ENCODE measurements at regions of chr14 and their contacts with region 1.

Region 1: GRCh38 chr14:23006544-23007419 is 3.2 kb downstream of the C14orf93 start:
- DNase-seq: peak; percentile 100
- ATAC-seq: peak; percentile 97
- H3K4me3 ChIP-seq: peak overlapping the region; percentile 68 to 82 (median 80)
- H3K27ac ChIP-seq: peak overlapping the region; percentile 86
- H3K4me1 ChIP-seq: peaks cover 52% of the 10 kb centered on the region
- H3K27me3 ChIP-seq: no peaks in the 10 kb centered on the region; a peak in 1 of 5 replicates
- CTCF ChIP-seq: peak; percentile 76
- EP300 ChIP-seq: peak in 1 of 2 experiments; percentile 9; a peak in 3 of 4 replicates
- POLR2A ChIP-seq: peak; percentile 96 to 98
- RAD21 ChIP-seq: peak; percentile 91

Region 2: GRCh38 chr14:22929104-22929847 is 77.5 kb before region 1 on chr14 and contains the start of gene PRMT5:
- CTCF ChIA-PET with region 1: no interaction called
- POLR2A ChIA-PET with region 1: interaction called, 54 read pairs
- in situ Hi-C with region 1: no loop called
- intact Hi-C with region 1: loop called (anchors 1 kb)
- DNase-seq: peak; percentile 100
- ATAC-seq: peak; percentile 98
- H3K4me3 ChIP-seq: peak within 1 kb of the TSS; percentile 77 to 98 (median 92)
- H3K27ac ChIP-seq: peak within 1 kb of the TSS; percentile 78
- H3K4me1 ChIP-seq: peaks cover 27% of the 10 kb centered on the region
- H3K27me3 ChIP-seq: no peaks in the 10 kb centered on the region; a peak in 1 of 5 replicates
- CTCF ChIP-seq: peak; percentile 60
- EP300 ChIP-seq: peak; percentile 56 to 82; a peak in 3 of 4 replicates
- POLR2A ChIP-seq: peak; percentile 96 to 98
- RAD21 ChIP-seq: peak; percentile 74
- total RNA-seq, gene PRMT5: 210 and 289 TPM in 2 replicates

Region 3: DNA sequence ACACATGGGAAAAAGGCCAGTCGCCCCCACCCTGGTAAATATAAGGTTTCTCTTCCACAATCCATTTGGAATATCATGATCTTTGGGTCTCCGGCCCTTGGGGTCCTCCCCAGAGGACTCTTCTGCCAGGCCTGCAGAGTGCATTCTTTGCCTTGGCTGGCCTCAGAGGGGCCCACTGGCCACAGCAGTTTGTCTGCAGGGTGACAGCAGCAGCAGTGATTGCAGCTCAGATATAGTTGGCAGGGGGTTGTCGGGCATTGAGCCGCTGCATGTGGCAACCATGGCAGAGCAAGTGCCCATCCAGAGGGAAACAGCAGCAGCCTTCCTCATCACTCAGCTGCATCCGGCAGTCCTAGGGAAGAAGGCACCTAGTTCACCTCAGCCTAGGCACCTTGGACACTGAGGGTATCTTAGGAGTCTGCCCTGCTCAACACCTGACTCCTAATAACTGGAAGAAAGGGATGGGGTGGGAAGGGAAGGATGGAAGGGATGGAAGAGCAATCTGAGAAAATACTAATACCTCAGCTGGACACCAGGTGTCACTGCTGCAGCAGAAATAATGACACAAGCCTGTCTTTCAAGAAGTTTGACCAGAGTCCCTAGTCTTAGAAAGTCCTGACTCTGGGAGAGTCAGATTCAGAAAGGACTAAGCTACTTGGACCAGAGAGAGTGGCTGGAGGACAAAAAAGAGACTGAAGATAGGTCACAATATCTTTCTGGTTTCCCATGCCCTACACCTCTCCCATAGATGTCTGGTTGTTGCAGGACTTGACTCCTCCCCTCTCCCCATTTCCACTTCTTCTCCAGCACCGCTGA is 33.4 kb before region 1 on chr14:
- CTCF ChIA-PET with region 1: no interaction called
- POLR2A ChIA-PET with region 1: interaction called, 561 read pairs
- in situ Hi-C with region 1: no loop called
- intact Hi-C with region 1: no loop called
- DNase-seq: peak; percentile 82
- ATAC-seq: no peak
- H3K4me3 ChIP-seq: no peak overlapping the region
- H3K27ac ChIP-seq: peak overlapping the region; percentile 97
- H3K4me1 ChIP-seq: peaks cover 65% of the 10 kb centered on the region
- H3K27me3 ChIP-seq: no peaks in the 10 kb centered on the region
- CTCF ChIP-seq: no peak
- EP300 ChIP-seq: no peak
- POLR2A ChIP-seq: peak in 1 of 2 experiments; percentile 73; a peak in 2 of 4 replicates
- RAD21 ChIP-seq: peak; percentile 97

Region 4: DNA sequence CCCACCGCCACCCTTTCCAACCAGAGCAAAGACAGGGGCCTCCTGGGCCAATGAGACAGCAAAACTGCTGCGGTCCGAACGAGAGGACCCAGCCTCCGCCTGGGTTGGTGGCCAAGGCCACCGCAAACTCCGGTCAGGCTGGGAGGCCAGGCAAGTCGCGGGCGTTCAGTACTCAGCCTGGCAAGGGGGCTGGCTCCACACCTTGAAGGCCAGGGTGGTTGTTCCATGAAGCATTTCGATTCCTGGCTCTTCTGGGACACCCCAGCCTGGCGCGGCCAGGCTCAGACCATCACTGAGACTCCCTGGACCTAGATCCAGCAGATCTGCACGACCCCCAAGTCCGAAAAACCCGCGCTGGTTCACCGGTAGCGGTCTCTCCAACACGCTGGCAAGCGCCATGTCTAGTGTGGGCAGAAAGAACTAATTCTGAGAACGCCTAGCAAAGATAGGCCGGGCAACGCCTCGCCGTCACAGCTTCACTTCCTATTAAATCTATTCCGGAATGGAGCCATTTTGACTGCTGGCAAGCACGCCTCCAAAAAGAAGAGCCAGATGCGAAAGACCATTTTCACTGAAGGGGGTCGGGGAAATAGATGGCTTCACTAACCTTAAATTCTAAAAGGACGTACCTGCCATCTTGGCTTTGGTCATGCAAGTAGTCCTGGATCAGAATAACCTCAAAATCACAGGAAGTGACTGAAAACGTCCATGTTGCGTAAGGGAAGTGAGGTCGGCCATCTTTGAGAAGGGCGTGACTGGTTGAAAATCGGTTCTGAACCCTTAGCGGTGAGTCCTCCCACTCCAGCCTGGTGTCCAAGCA is 27.9 kb after region 1 on chr14 and contains the start of gene PSMB5:
- CTCF ChIA-PET with region 1: no interaction called
- POLR2A ChIA-PET with region 1: interaction called, 203 read pairs
- in situ Hi-C with region 1: no loop called
- intact Hi-C with region 1: loop called (anchors 1 kb)
- DNase-seq: peak; percentile 100
- ATAC-seq: peak; percentile 96
- H3K4me3 ChIP-seq: peak within 1 kb of the TSS; percentile 78 to 86 (median 80)
- H3K27ac ChIP-seq: peak within 1 kb of the TSS; percentile 90
- H3K4me1 ChIP-seq: peaks cover 38% of the 10 kb centered on the region
- H3K27me3 ChIP-seq: no peaks in the 10 kb centered on the region; a peak in 1 of 5 replicates
- CTCF ChIP-seq: peak; percentile 14
- EP300 ChIP-seq: peak; percentile 3 to 52; a peak in 2 of 4 replicates
- POLR2A ChIP-seq: peak in 1 of 2 experiments; percentile 98; a peak in 2 of 4 replicates
- RAD21 ChIP-seq: peak; percentile 49; the same call in 1 of the 2 replicates
- total RNA-seq, gene PSMB5: 871 and 1,316 TPM in 2 replicates

Region 5: DNA sequence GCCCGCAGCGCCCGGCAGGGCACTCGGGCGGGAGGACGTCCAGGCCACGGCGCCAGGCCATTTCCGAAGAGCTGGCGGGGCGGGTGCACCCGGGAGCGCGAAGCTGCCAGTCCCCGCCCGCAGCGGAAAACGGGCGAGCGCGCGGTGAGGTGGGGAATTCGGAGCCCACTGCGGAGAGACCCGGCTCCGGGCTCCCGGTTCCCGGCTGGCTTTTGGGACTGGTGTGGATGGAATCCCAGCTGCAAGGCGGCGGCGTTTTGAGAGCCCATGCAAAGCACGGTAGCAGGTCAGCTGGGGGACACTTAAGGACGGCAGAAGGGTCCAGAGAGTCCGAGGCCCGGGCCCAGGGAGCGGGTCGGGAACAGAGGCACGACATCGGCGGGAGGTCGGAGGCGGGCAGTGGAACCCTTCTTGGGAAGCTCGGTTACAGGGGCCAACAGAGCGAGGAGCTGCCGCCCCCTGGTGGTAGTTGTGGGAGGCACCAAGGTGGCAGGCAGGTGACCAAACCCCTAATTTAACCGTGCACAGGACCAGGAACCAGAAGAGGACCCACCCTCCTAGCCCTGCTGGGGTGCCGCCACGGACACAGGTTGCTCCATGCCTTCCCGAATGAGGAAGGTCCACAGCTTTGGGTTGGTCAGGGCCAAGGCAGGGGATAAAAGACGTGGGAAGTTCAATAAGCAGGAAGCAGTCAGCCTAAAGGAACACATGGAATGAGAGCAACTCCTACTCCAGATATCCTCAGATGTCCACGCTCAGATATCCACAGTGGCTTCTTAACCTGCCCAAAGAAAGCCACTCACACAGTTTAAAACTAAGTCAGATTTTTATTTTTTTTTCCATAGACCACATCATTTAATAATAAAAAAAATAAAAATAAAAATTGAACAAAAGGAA is 51.2 kb after region 1 on chr14:
- CTCF ChIA-PET with region 1: no interaction called
- POLR2A ChIA-PET with region 1: interaction called, 72 read pairs
- in situ Hi-C with region 1: no loop called
- intact Hi-C with region 1: loop called (anchors 1 kb)
- DNase-seq: peak; percentile 92
- ATAC-seq: peak; percentile 71
- H3K4me3 ChIP-seq: peak overlapping the region; percentile 55 to 88 (median 64)
- H3K27ac ChIP-seq: no peak overlapping the region
- H3K4me1 ChIP-seq: peaks cover 29% of the 10 kb centered on the region
- H3K27me3 ChIP-seq: peaks cover 0 to 6% of the 10 kb centered on the region in 2 experiments; a peak in 1 of 5 replicates
- CTCF ChIP-seq: peak; percentile 100
- EP300 ChIP-seq: peak in 1 of 2 experiments; percentile 66; a peak in 1 of 4 replicates
- POLR2A ChIP-seq: peak in 1 of 2 experiments; percentile 39; a peak in 1 of 4 replicates
- RAD21 ChIP-seq: peak; percentile 98

Region 6: DNA sequence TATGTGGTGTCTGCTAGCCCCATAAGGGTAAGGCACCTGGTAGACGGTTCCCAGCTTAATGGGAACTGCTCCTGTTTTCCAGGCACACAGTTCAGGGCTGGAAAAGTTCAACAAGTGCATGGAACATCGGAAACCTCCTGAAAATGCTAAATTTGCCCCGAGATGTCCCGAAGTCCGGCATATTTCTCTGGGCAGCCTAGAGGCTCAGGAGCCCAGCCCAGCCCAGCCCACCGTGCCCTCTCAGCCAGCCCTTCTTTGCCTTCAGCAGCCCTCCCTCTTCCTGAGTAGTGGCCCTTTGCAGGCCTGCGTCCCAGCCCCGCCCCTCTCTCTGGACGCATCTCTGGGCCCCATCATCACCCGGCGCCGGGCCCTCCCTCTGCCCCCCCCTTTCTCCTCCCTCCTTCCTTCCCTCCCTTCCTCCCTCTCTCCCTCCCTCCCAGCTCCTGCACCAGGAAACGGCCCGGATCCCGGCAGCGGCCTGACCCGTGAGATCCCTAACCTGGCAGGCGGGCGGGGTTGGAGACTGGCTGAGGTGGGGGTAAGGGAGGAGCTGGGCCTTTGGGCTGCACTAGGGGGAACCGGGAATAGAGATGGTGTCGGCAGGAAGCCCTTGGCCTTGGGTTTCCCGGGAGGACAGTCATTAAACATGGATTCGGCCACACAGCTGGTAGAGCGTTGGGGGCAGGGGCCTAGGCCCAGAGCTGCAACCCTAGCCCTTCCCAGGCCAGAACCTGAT is 299.8 kb after region 1 on chr14 and contains the start of gene BCL2L2:
- CTCF ChIA-PET with region 1: no interaction called
- POLR2A ChIA-PET with region 1: interaction called, 12 read pairs
- in situ Hi-C with region 1: no loop called
- intact Hi-C with region 1: no loop called
- DNase-seq: peak; percentile 98
- ATAC-seq: peak; percentile 76
- H3K4me3 ChIP-seq: peak within 1 kb of the TSS; percentile 95 to 99 (median 96)
- H3K27ac ChIP-seq: peak within 1 kb of the TSS; percentile 87
- H3K4me1 ChIP-seq: peaks cover 60% of the 10 kb centered on the region
- H3K27me3 ChIP-seq: no peaks in the 10 kb centered on the region; a peak in 1 of 5 replicates
- CTCF ChIP-seq: peak; percentile 54
- EP300 ChIP-seq: peak; percentile 69 to 85
- POLR2A ChIP-seq: peak in 1 of 2 experiments; percentile 90; a peak in 2 of 4 replicates
- RAD21 ChIP-seq: no peak
- total RNA-seq, gene BCL2L2: 26.6 and 28.1 TPM in 2 replicates